Ovary (tissue), 10 donors: ENCODE measurements at regions of chr2 and their contacts with region 1.

Region 1: DNA sequence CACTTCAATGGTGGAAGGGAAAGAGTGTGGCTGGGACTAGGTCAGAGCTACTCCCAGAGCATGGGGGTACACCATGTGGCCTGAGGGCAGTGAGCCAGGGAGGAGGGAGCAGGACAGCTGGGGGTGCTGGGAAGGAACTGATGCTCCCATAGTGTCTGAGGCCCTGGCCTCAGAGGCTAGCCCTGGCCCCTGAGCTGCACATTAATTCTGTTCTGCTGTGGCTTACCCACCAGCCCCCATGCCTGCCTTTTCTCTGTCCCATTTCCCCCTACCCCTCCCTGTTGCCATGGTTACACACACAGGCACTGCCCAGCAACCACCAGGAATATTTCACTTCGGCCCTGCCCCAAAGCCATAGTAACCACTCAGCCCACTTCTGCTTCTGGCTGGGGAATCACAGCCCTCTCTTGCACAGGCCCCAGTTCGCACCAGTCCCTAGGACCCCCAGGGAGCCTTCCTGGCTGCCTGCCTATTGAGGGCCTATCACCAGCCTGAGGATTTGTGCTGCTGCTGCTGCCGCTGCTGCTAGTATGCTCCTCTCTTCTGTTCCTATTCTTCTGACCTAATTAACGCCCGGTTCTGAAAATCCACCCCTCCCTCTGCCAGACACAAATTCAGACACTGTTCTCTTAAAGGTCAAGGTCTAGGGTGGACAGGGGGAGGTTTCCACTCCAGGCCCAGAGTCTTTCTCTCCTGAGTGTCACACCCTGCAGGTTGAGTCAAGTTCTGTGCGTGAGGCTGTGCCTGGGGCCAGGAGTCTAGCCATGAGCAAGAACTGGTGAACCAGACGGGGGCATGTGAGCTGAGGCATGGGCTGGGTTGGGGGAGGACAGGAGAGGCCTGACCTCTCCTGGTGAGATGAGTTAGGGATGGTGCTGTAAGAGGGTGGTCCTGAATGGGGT is 87.1 kb upstream of the MCFD2 start:
- DNase-seq: peak; percentile 58 to 76 (median 68)
- H3K4me3 ChIP-seq: no peak overlapping the region
- H3K27ac ChIP-seq: peak overlapping the region in 1 of 2 donors; percentile 11
- H3K4me1 ChIP-seq: peaks cover 22% of the 10 kb centered on the region
- H3K27me3 ChIP-seq: no peaks in the 10 kb centered on the region
- CTCF ChIP-seq: no peak
- EP300 ChIP-seq: no peak
- POLR2A ChIP-seq: no peak

Region 2: DNA sequence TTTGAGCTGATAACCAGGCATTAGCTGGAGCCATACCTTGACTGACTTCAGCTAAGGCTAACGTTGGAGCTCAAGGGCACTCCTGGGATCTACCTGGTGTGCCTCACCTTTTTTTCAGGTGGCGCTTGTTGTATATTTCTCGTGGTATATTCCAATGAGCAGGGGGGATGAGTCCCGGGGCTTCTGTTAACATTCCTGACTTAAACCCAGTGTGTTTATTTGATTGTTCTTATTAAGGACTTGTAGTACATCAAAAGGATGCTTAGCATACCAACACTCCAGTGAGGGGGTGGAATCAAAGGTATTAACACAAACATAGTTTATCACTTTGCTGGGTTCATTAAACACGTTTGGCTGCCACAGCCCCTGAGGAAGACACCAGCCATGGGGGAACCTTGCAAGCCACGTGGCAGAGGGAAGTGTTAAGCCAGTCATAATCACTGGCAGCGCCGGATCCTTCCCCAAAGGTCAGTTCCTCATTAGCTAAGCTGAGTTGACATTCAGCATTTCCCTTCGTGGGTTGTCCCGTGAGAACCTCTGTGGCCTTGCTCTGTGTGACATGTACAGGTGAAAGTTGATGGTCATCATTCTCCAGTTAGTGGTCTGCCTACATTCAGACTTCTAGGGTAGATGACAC is 32.4 kb after region 1 on chr2:
- intact Hi-C with region 1: no loop called
- DNase-seq: peak in 1 of 5 donors; percentile 50
- H3K4me3 ChIP-seq: no peak overlapping the region
- H3K27ac ChIP-seq: peak overlapping the region; percentile 50 to 82
- H3K4me1 ChIP-seq: peaks cover 22% of the 10 kb centered on the region
- H3K27me3 ChIP-seq: no peaks in the 10 kb centered on the region
- CTCF ChIP-seq: no peak
- EP300 ChIP-seq: no peak
- POLR2A ChIP-seq: no peak

Region 3: GRCh38 chr2:47058003-47058931 is 55.5 kb after region 1 on chr2:
- intact Hi-C with region 1: loop called in 1 of 4 experiments (anchors 10 kb)
- DNase-seq: peak in 1 of 5 donors; percentile 72
- H3K4me3 ChIP-seq: no peak overlapping the region
- H3K27ac ChIP-seq: peak overlapping the region; percentile 21 to 30
- H3K4me1 ChIP-seq: peaks cover 33% of the 10 kb centered on the region
- H3K27me3 ChIP-seq: no peaks in the 10 kb centered on the region
- CTCF ChIP-seq: no peak
- EP300 ChIP-seq: no peak
- POLR2A ChIP-seq: no peak